PC-9 (cell line): ENCODE measurements at regions of chr10 and their contacts with region 1.

Region 1: GRCh38 chr10:97925308-97925938 is 75.8 kb downstream of the GOLGA7B start:
- DNase-seq: no peak
- H3K4me3 ChIP-seq: no peak overlapping the region
- H3K27ac ChIP-seq: no peak overlapping the region
- H3K4me1 ChIP-seq: no peaks in the 10 kb centered on the region
- H3K27me3 ChIP-seq: peaks cover 69% of the 10 kb centered on the region
- CTCF ChIP-seq: no peak

Region 2: GRCh38 chr10:97961979-97962378 is 36.6 kb after region 1 on chr10:
- CTCF ChIA-PET with region 1: no interaction called
- POLR2A ChIA-PET with region 1: no interaction called
- intact Hi-C with region 1: loop called (anchors 2 kb)
- DNase-seq: no peak
- H3K4me3 ChIP-seq: no peak overlapping the region
- H3K27ac ChIP-seq: no peak overlapping the region
- H3K4me1 ChIP-seq: no peaks in the 10 kb centered on the region
- H3K27me3 ChIP-seq: peaks cover 91% of the 10 kb centered on the region
- CTCF ChIP-seq: no peak

Region 3: DNA sequence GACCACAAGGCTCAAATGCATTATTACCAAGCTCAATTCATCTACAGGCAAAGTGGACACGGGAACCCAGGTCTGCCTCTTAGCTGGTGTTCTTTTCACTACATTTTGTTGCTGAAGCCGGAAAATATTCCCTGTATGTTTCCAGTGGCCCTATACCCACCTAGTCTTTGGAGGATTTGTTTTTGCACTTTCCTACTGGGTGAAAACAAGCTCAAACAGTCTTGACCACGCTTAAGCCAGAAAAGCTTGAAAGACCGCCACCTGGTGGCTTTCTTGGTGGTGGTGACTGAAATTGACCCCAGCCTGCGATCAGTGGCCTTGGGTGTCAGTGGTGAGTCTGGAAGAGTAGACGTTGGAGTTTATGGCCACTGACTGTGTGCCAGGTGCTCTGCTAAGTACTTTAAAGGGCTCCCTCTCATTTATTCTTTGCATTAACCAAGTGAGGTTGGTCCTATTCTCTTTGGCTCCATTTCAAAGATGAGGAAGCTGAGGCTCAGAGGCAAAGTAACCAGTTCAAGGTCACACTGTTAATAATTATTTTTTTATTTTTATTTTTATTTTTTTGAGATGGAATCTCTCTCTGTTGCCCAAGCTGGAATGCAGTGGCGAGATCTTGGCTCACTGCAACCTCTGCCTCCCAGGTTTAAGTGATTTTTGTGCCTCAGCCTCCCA is 116.1 kb after region 1 on chr10:
- CTCF ChIA-PET with region 1: no interaction called
- POLR2A ChIA-PET with region 1: no interaction called
- intact Hi-C with region 1: no loop called
- DNase-seq: peak in 1 of 2 experiments; percentile 34
- H3K4me3 ChIP-seq: no peak overlapping the region
- H3K27ac ChIP-seq: no peak overlapping the region
- H3K4me1 ChIP-seq: no peaks in the 10 kb centered on the region
- H3K27me3 ChIP-seq: peaks cover 49% of the 10 kb centered on the region
- CTCF ChIP-seq: peak; percentile 65